GM12878 (cell line): ENCODE measurements at regions of chr22 and their contacts with region 1.

Region 1: DNA sequence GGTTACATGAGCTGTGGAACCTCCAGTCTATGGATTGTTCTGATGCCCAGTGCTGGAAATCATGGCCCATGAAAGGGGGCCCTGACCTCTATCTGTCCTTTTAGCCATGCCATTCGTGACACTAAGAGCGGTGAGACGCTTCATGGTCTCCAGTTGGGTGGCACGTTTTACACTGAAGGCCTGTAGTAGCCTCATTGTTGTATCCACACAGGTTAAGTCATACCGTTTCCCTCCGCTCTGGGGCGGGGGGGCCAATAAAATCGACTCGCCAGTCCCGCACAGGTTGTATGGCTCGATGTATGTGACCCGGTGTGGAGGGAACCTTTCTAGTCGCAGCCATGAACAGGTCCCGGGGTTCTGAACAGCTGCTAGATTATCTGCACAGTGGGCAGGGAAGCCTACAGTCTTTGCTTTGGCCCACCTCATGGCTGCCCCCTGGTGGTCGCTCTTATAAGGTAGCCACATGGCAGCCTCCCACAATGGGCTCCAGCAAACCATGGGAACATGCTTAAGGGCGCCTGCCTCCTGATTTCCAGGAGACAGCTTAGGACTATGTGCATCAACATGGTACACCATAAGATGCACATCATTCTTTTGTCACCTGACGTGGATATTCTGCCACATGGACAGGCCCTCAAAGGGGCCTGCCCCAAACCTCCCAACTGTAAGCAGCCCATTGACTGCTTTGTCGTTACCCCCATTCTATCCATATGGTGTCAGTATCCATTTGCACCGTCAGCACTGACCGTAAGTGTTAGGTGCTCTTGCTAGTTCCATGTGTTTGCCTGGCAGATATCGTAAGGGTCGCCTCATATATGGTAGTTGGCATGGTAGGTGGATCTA is 19.7 kb upstream of the APOL3 start:
- DNase-seq: no peak
- ATAC-seq: peak; percentile 100
- H3K4me3 ChIP-seq: no peak overlapping the region
- H3K27ac ChIP-seq: no peak overlapping the region
- H3K4me1 ChIP-seq: no peaks in the 10 kb centered on the region
- H3K27me3 ChIP-seq: no peaks in the 10 kb centered on the region
- CTCF ChIP-seq: peak; percentile 90 to 91 (median 91)
- EP300 ChIP-seq: no peak
- POLR2A ChIP-seq: no peak
- RAD21 ChIP-seq: peak; percentile 86

Region 2: DNA sequence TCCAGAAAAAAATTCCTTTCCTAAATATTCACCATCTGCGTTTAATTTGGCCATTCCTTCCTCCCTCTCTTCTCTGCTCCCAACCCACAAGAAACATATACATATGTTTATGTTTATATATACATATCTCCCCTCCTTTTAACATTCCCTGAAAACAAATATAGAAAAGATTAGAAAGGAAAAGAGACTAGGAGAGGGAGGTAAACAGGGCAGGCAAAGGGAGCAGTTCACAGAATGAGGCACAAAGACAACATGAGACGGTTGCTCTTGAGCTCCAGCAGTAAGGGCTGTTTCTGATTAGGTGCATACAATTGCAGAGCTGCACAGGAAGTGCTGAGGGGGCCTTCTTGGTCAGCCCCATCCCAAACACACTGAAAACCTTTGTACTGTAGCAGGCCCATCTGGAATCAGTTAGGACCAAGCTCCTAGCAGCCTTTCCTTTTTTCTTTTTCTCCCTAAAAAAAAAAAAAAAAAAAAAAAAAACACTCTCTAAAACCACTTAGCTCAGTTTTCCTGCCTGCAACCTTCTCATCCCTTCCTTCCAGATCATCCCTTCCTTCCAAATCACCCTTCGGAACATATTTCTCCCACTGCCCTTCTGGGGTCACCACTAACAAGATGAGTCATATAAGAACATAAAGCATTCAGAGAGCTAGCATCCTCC is 208.7 kb before region 1 on chr22:
- CTCF ChIA-PET with region 1: no interaction called
- POLR2A ChIA-PET with region 1: no interaction called
- RAD21 ChIA-PET with region 1: no interaction called
- SMC1A ChIA-PET with region 1: no interaction called
- in situ Hi-C with region 1: no loop called
- intact Hi-C with region 1: no loop called
- DNase-seq: no peak
- ATAC-seq: no peak
- H3K4me3 ChIP-seq: no peak overlapping the region
- H3K27ac ChIP-seq: no peak overlapping the region
- H3K4me1 ChIP-seq: no peaks in the 10 kb centered on the region
- H3K27me3 ChIP-seq: no peaks in the 10 kb centered on the region; a peak in 1 of 4 replicates
- CTCF ChIP-seq: no peak
- EP300 ChIP-seq: no peak
- POLR2A ChIP-seq: no peak
- RAD21 ChIP-seq: no peak

Region 3: GRCh38 chr22:36144886-36145541 is 35.2 kb before region 1 on chr22:
- CTCF ChIA-PET with region 1: interaction called, 129 read pairs
- POLR2A ChIA-PET with region 1: interaction called, 4 read pairs
- RAD21 ChIA-PET with region 1: interaction called, 31 read pairs
- SMC1A ChIA-PET with region 1: interaction called, 53 read pairs
- in situ Hi-C with region 1: loop called (anchors 5 kb)
- intact Hi-C with region 1: loop called (anchors 1 kb)
- DNase-seq: no peak
- ATAC-seq: peak; percentile 90
- H3K4me3 ChIP-seq: no peak overlapping the region
- H3K27ac ChIP-seq: no peak overlapping the region
- H3K4me1 ChIP-seq: no peaks in the 10 kb centered on the region
- H3K27me3 ChIP-seq: no peaks in the 10 kb centered on the region
- CTCF ChIP-seq: peak; percentile 60 to 71 (median 67)
- EP300 ChIP-seq: no peak
- POLR2A ChIP-seq: no peak
- RAD21 ChIP-seq: peak; percentile 77

Region 4: GRCh38 chr22:36156515-36157419 is 23.5 kb before region 1 on chr22:
- CTCF ChIA-PET with region 1: interaction called, 150 read pairs
- POLR2A ChIA-PET with region 1: interaction called, 4 read pairs
- RAD21 ChIA-PET with region 1: interaction called, 71 read pairs
- SMC1A ChIA-PET with region 1: interaction called, 154 read pairs
- in situ Hi-C with region 1: no loop called
- intact Hi-C with region 1: no loop called
- DNase-seq: no peak
- ATAC-seq: peak; percentile 43
- H3K4me3 ChIP-seq: peak overlapping the region; percentile 64
- H3K27ac ChIP-seq: peak overlapping the region; percentile 86
- H3K4me1 ChIP-seq: peaks cover 36% of the 10 kb centered on the region
- H3K27me3 ChIP-seq: no peaks in the 10 kb centered on the region
- CTCF ChIP-seq: no peak
- EP300 ChIP-seq: no peak
- POLR2A ChIP-seq: no peak
- RAD21 ChIP-seq: no peak

Region 5: GRCh38 chr22:36277482-36278291 is 97.4 kb after region 1 on chr22:
- CTCF ChIA-PET with region 1: interaction called, 13 read pairs
- POLR2A ChIA-PET with region 1: interaction called, 4 read pairs
- RAD21 ChIA-PET with region 1: interaction called, 6 read pairs
- SMC1A ChIA-PET with region 1: interaction called, 6 read pairs
- in situ Hi-C with region 1: no loop called
- intact Hi-C with region 1: no loop called
- DNase-seq: no peak
- ATAC-seq: peak; percentile 93
- H3K4me3 ChIP-seq: no peak overlapping the region
- H3K27ac ChIP-seq: no peak overlapping the region
- H3K4me1 ChIP-seq: peaks cover 6% of the 10 kb centered on the region
- H3K27me3 ChIP-seq: no peaks in the 10 kb centered on the region
- CTCF ChIP-seq: peak; percentile 79 to 85 (median 83)
- EP300 ChIP-seq: no peak
- POLR2A ChIP-seq: no peak
- RAD21 ChIP-seq: peak; percentile 64